Activated naive CD8-positive, alpha-beta T cell treated with anti-CD3 and anti-CD28 coated beads, Interleukin-2, amount 10 ng/mL, durations not matched to agents 7 days and 5 days (primary cell): ENCODE measurements at regions of chr9 and their contacts with region 1.

Region 1: DNA sequence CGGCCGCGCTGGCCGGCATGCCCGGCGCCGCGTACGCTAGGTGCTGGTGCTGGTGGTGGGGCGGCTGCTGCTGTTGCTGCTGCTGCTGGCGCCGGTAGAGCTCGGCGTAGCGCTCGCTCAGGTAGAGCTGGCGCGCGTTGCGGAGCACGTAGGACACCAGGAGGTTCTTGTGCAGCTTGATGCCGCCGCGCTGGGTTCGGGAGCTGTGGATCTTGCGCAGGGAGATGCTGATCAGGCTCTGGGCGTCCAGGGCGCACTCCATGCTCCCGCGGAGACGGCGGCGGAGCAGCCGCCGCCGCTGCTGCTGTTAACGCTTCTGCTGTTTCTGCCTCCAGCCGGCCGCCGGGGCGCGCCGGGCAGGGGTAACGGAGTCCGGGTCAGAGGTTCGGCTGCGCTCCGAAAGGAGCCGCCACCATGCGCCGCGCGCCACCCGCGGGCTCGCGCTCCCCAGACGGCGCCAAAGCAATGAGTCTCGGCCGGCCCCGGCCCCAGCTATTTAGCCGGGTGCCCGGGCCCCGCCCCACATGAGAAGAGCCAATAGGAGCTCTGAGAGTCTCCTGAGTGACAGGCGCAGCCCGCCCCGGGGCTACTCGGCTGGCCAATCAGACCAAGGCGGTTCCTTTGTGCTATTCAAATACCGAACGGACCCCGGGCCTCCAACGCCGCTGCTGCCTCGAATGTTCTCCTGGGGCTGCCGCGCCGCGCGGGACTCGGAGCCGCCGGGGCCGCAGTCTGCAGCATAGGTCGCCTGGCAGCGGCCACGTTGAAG is at the start of gene IER5L:
- DNase-seq: peak; percentile 95
- ATAC-seq: peak; percentile 83
- H3K4me3 Mint-ChIP-seq: peak within 1 kb of the TSS; percentile 89
- H3K27ac Mint-ChIP-seq: peak within 1 kb of the TSS; percentile 76
- H3K4me1 Mint-ChIP-seq: peaks cover 8% of the 10 kb centered on the region
- H3K27me3 Mint-ChIP-seq: peaks cover 6% of the 10 kb centered on the region
- total RNA-seq, gene IER5L: 8.6 to 8.8 TPM

Region 2: DNA sequence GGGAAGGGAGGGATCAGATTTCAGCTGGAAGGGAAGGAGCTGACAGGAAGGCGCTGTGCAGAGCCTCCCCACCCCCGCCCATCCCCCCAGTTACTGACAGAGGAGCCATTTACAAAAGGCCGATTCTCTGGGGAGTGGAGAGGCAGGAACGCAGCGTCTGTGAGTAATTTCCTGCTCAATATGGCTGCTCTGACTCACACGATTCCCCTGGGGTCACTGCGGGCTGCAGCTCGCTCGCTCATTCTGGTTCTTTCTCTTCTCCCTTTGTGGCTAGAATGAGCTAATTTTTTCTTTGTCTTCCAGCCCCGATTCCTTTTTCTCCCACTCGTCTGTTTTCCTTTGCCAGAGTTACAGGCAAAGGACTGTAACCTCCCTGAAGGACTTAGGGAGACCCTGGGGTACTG is 38.0 kb before region 1 on chr9:
- POLR2A ChIA-PET with region 1: interaction called, 44 read pairs
- DNase-seq: peak; percentile 66
- ATAC-seq: peak; percentile 86
- H3K4me3 Mint-ChIP-seq: peak overlapping the region; percentile 87
- H3K27ac Mint-ChIP-seq: peak overlapping the region; percentile 98
- H3K4me1 Mint-ChIP-seq: peaks cover 28% of the 10 kb centered on the region
- H3K27me3 Mint-ChIP-seq: no peaks in the 10 kb centered on the region

Region 3: GRCh38 chr9:129221233-129221632 is 43.3 kb after region 1 on chr9:
- POLR2A ChIA-PET with region 1: interaction called, 22 read pairs
- DNase-seq: peak; percentile 54
- ATAC-seq: peak; percentile 89
- H3K4me3 Mint-ChIP-seq: peak overlapping the region; percentile 74
- H3K27ac Mint-ChIP-seq: peak overlapping the region; percentile 75
- H3K4me1 Mint-ChIP-seq: peaks cover 36% of the 10 kb centered on the region
- H3K27me3 Mint-ChIP-seq: no peaks in the 10 kb centered on the region

Region 4: GRCh38 chr9:129383561-129384416 is 205.8 kb after region 1 on chr9:
- POLR2A ChIA-PET with region 1: interaction called, 13 read pairs
- DNase-seq: peak; percentile 81
- ATAC-seq: peak; percentile 91
- H3K4me3 Mint-ChIP-seq: peak overlapping the region; percentile 83
- H3K27ac Mint-ChIP-seq: peak overlapping the region; percentile 93
- H3K4me1 Mint-ChIP-seq: peaks cover 14% of the 10 kb centered on the region
- H3K27me3 Mint-ChIP-seq: peaks cover 2% of the 10 kb centered on the region

Region 5: GRCh38 chr9:129626079-129626624 is 448.2 kb after region 1 on chr9 and contains the start of gene NTMT1:
- POLR2A ChIA-PET with region 1: interaction called, 13 read pairs
- DNase-seq: peak; percentile 95
- ATAC-seq: peak; percentile 65
- H3K4me3 Mint-ChIP-seq: peak within 1 kb of the TSS; percentile 86
- H3K27ac Mint-ChIP-seq: peak within 1 kb of the TSS; percentile 89
- H3K4me1 Mint-ChIP-seq: peaks cover 33% of the 10 kb centered on the region
- H3K27me3 Mint-ChIP-seq: peaks cover 13% of the 10 kb centered on the region
- total RNA-seq, gene NTMT1: 30.1 to 34.9 TPM